ENCODE measurements at regions of chr18 and their contacts with region 1.

Region 1: DNA sequence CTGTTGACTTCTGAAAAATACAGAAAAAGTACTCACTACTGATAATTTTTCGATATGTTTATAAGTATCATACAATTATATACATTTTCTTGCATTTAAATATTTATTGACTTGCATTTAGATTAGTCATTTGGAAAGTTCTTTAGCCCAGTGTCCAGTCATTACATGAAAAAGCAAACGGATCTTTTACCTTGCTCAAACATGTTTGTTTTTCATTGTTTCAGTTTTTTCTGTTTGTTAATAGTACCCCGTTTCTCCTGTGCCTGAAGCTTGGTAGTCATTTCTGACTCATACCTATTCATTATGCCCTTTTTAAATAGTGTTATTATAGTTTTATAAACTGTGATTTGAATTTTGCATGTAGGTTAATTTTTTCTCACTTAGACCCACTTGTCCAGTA is 28.1 kb downstream of the CEP192 start:
- DNase-seq: no peak
- H3K4me3 ChIP-seq: no peak overlapping the region
- H3K27ac ChIP-seq: no peak overlapping the region
- H3K4me1 ChIP-seq: no peaks in the 10 kb centered on the region
- H3K27me3 ChIP-seq: no peaks in the 10 kb centered on the region
- CTCF ChIP-seq: no peak
- EP300 ChIP-seq: no peak
- POLR2A ChIP-seq: no peak

Region 2: GRCh38 chr18:12254136-12254829 is 765.0 kb before region 1 on chr18 and contains the start of gene CIDEA:
- intact Hi-C with region 1: no loop called
- DNase-seq: no peak
- H3K4me3 ChIP-seq: peak within 1 kb of the TSS; percentile 20
- H3K27ac ChIP-seq: no peak within 1 kb of the TSS
- H3K4me1 ChIP-seq: peaks cover 3% of the 10 kb centered on the region
- H3K27me3 ChIP-seq: no peaks in the 10 kb centered on the region
- CTCF ChIP-seq: no peak
- EP300 ChIP-seq: no peak
- POLR2A ChIP-seq: no peak
- total RNA-seq, gene CIDEA: not detected

Region 3: GRCh38 chr18:13137670-13138419 is 118.5 kb after region 1 on chr18:
- intact Hi-C with region 1: loop called in 1 of 4 experiments (anchors 10 kb)
- DNase-seq: peak; percentile 63 to 77 (median 72)
- H3K4me3 ChIP-seq: peak overlapping the region; percentile 71
- H3K27ac ChIP-seq: peak overlapping the region; percentile 43 to 89
- H3K4me1 ChIP-seq: peaks cover 1% of the 10 kb centered on the region
- H3K27me3 ChIP-seq: no peaks in the 10 kb centered on the region
- CTCF ChIP-seq: no peak
- EP300 ChIP-seq: no peak
- POLR2A ChIP-seq: no peak